ENCODE measurements at regions of chr13 and their contacts with region 1.

Region 1: GRCh38 chr13:110412132-110412914 is 105.2 kb downstream of the COL4A2 start:
- DNase-seq: peak; percentile 75
- H3K4me3 Mint-ChIP-seq: no peak overlapping the region
- H3K27ac Mint-ChIP-seq: no peak overlapping the region
- H3K4me1 Mint-ChIP-seq: peaks cover 2% of the 10 kb centered on the region
- H3K27me3 Mint-ChIP-seq: peaks cover 87% of the 10 kb centered on the region

Region 2: GRCh38 chr13:110218581-110219201 is 193.6 kb before region 1 on chr13:
- CTCF ChIA-PET with region 1: interaction called, 46 read pairs
- DNase-seq: no peak
- H3K4me3 Mint-ChIP-seq: no peak overlapping the region
- H3K27ac Mint-ChIP-seq: no peak overlapping the region
- H3K4me1 Mint-ChIP-seq: no peaks in the 10 kb centered on the region
- H3K27me3 Mint-ChIP-seq: peaks cover 30% of the 10 kb centered on the region